CD8-positive, alpha-beta T cell (primary cell): ENCODE measurements at regions of chr1 and their contacts with region 1.

Region 1: GRCh38 chr1:173867753-173868265 is at the start of gene GAS5:
- DNase-seq: peak; percentile 97 to 99 (median 98)
- ATAC-seq: peak; percentile 78
- H3K4me3 ChIP-seq: peak within 1 kb of the TSS; percentile 74 to 93
- H3K4me3 Mint-ChIP-seq: peak within 1 kb of the TSS; percentile 95
- H3K27ac ChIP-seq: peak within 1 kb of the TSS; percentile 75 to 93
- H3K27ac Mint-ChIP-seq: peak within 1 kb of the TSS; percentile 96
- H3K4me1 ChIP-seq: peaks cover 61% of the 10 kb centered on the region
- H3K4me1 Mint-ChIP-seq: peaks cover 70% of the 10 kb centered on the region
- H3K27me3 ChIP-seq: no peaks in the 10 kb centered on the region
- H3K27me3 Mint-ChIP-seq: no peaks in the 10 kb centered on the region
- CTCF ChIP-seq: no peak
- total RNA-seq, gene GAS5: 774 to 800 TPM

Region 2: DNA sequence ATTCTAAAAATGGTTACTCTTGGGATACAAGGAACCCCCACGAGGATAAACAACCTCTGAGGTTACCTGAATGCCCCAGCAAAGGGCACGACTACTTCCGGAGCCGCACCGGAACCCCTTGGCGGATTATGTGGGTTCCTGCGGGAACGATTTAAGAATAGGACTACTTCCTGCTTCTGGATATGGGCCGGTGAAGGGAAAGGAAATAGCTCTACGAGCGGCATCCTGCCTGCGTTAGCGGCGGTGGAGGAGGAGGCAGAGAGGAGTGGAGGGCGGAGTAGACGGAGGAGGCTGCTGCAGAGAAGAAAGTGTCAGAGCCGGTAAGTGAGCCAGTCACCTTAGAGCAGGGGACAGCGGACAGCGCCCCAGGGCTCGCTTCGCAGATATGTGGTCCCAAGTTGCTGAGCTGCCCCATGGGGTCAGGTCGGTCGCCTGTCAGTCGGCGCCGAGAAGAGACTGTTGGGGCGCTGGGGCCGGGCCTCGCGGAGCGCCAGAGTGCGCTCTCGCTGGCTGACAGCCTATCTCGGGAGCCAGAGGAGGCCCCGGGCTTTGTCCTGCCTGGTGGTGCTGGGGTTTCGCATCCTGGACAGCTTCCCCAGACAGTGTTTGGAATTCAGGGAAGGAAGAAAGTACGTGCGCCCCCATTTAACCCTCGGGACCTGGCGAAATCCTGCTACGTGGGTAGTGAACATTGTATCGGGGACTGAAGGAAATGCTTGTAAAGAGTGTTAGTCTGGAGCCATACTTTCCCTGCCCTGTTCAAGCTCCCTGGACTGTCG is 152.9 kb before region 1 on chr1 and contains the start of gene KLHL20:
- CTCF ChIA-PET with region 1: no interaction called
- POLR2A ChIA-PET with region 1: interaction called, 11 read pairs
- intact Hi-C with region 1: loop called (anchors 1 to 5 kb)
- DNase-seq: peak; percentile 72 to 94 (median 83)
- ATAC-seq: peak; percentile 98
- H3K4me3 ChIP-seq: peak within 1 kb of the TSS; percentile 80 to 86
- H3K4me3 Mint-ChIP-seq: peak within 1 kb of the TSS; percentile 96
- H3K27ac ChIP-seq: peak within 1 kb of the TSS; percentile 76 to 87
- H3K27ac Mint-ChIP-seq: peak within 1 kb of the TSS; percentile 97
- H3K4me1 ChIP-seq: peaks cover 24% of the 10 kb centered on the region
- H3K4me1 Mint-ChIP-seq: peaks cover 38% of the 10 kb centered on the region
- H3K27me3 ChIP-seq: peaks cover 0 to 2% of the 10 kb centered on the region in 2 experiments
- H3K27me3 Mint-ChIP-seq: peaks cover 7% of the 10 kb centered on the region
- CTCF ChIP-seq: no peak
- total RNA-seq, gene KLHL20: 27.9 to 29.0 TPM

Region 3: DNA sequence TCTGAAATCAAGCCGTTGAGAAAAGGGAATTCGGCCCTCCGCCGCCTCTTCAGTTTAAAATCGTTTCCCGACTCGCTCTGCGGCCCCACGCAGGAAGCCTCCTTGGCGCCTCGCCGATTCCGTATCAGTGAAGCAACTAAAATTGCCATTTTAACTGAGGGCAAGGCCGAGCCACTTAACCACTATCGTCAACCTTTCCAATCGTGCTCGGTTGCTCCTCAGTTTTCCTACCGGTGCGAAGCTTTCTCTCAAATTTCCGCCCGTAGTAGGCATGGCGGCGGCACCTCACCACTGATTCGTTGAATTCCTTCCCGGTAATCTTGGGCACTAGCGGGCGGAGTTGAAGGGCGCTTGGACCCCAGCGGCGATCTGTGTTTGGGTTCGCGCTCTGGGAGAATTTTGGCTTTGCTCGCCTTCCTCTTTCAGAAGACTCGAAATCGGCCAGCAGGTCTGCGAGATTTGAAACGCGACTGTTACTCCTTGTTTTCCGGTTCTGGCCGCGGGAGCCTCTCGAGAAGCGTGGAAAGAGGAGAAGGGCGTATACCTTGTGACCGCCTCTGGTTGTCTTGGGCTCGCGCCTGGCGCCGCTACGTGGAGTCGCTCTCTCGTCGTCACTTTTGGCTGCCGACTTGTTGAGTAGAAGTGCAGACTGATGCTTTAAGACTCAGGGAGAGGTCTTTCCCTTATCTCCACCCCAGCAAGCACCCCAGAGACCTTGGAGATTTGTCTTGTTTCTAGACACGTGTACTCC is 43.3 kb before region 1 on chr1 and contains the starts of genes CENPL and DARS2:
- CTCF ChIA-PET with region 1: interaction called, 9 read pairs
- POLR2A ChIA-PET with region 1: interaction called, 24 read pairs
- intact Hi-C with region 1: loop called (anchors 1 kb)
- DNase-seq: peak; percentile 79 to 97 (median 90)
- ATAC-seq: peak; percentile 86
- H3K4me3 ChIP-seq: peak within 1 kb of the TSS; percentile 92 to 97
- H3K4me3 Mint-ChIP-seq: peak within 1 kb of the TSS; percentile 93
- H3K27ac ChIP-seq: peak within 1 kb of the TSS; percentile 78 to 87
- H3K27ac Mint-ChIP-seq: peak within 1 kb of the TSS; percentile 90
- H3K4me1 ChIP-seq: peaks cover 11% of the 10 kb centered on the region
- H3K4me1 Mint-ChIP-seq: peaks cover 54% of the 10 kb centered on the region
- H3K27me3 ChIP-seq: no peaks in the 10 kb centered on the region
- H3K27me3 Mint-ChIP-seq: no peaks in the 10 kb centered on the region
- CTCF ChIP-seq: no peak
- total RNA-seq, gene CENPL: 4.0 to 5.7 TPM
- total RNA-seq, gene DARS2: 1.5 to 1.6 TPM

Region 4: GRCh38 chr1:173853074-173853473 is 14.7 kb before region 1 on chr1:
- CTCF ChIA-PET with region 1: no interaction called
- POLR2A ChIA-PET with region 1: interaction called, 12 read pairs
- intact Hi-C with region 1: no loop called
- DNase-seq: no peak
- ATAC-seq: no peak
- H3K4me3 ChIP-seq: no peak overlapping the region
- H3K4me3 Mint-ChIP-seq: no peak overlapping the region
- H3K27ac ChIP-seq: no peak overlapping the region
- H3K27ac Mint-ChIP-seq: no peak overlapping the region
- H3K4me1 ChIP-seq: no peaks in the 10 kb centered on the region
- H3K4me1 Mint-ChIP-seq: no peaks in the 10 kb centered on the region
- H3K27me3 ChIP-seq: no peaks in the 10 kb centered on the region
- H3K27me3 Mint-ChIP-seq: no peaks in the 10 kb centered on the region
- CTCF ChIP-seq: no peak

Region 5: GRCh38 chr1:174022080-174022975 is 154.5 kb after region 1 on chr1 and contains the start of gene RC3H1:
- CTCF ChIA-PET with region 1: no interaction called
- POLR2A ChIA-PET with region 1: interaction called, 8 read pairs
- intact Hi-C with region 1: loop called (anchors 1 to 2 kb)
- DNase-seq: peak; percentile 79 to 93 (median 89)
- ATAC-seq: peak; percentile 95
- H3K4me3 ChIP-seq: peak within 1 kb of the TSS; percentile 83 to 94
- H3K4me3 Mint-ChIP-seq: peak within 1 kb of the TSS; percentile 95
- H3K27ac ChIP-seq: peak within 1 kb of the TSS; percentile 84 to 93
- H3K27ac Mint-ChIP-seq: peak within 1 kb of the TSS; percentile 98
- H3K4me1 ChIP-seq: peaks cover 30% of the 10 kb centered on the region
- H3K4me1 Mint-ChIP-seq: peaks cover 45% of the 10 kb centered on the region
- H3K27me3 ChIP-seq: no peaks in the 10 kb centered on the region
- H3K27me3 Mint-ChIP-seq: no peaks in the 10 kb centered on the region
- CTCF ChIP-seq: no peak
- total RNA-seq, gene RC3H1: 40.2 to 41.4 TPM

Region 6: DNA sequence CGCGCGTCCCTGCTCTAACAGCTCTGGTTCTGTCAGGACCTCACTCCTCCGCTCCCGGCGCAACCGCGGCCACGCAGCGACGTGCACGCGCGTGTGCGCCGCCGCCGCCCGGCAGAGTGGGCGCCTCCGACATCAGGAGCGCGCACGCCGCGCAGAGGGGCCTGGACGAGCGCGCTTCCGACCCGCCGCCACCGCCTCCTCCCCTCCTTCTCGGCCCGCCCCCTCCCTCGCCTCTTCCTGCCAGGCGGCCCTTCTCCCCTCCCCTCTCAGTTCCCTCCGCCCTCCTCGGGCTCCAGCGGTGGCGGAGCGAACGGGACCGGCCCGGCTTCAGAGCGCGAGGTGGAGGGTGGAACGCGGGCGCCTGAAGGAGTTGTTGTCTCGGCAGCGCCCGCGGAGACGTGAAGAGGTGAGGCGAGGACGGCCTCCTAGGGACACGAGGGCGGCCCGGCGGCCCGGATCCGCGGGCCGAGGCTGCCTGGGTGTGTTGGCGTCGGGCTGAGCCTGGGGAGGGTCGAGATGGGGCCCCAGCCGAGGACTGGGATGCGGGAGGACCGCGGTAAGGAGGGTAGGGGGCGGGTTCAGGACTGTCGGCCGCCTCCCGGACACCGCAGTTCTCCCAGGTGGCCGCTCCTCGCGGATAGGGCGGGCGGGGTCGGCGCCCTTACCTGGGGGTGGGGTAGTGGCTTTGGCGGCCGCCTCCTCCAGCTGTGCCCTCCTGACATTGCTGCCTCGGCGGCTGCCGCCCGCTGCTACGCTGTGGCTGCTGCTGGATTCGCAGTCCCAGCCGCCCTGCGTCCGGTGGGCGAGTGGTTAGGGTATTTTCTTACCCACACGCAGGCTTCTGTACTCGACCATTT is 291.7 kb after region 1 on chr1 and contains the start of gene RABGAP1L:
- CTCF ChIA-PET with region 1: no interaction called
- POLR2A ChIA-PET with region 1: interaction called, 4 read pairs
- intact Hi-C with region 1: loop called (anchors 1 to 2 kb)
- DNase-seq: peak; percentile 90 to 98 (median 93)
- ATAC-seq: peak; percentile 90
- H3K4me3 ChIP-seq: peak within 1 kb of the TSS; percentile 73 to 74
- H3K4me3 Mint-ChIP-seq: peak within 1 kb of the TSS; percentile 91
- H3K27ac ChIP-seq: peak within 1 kb of the TSS; percentile 73 to 93
- H3K27ac Mint-ChIP-seq: peak within 1 kb of the TSS; percentile 96
- H3K4me1 ChIP-seq: peaks cover 16% of the 10 kb centered on the region
- H3K4me1 Mint-ChIP-seq: peaks cover 53% of the 10 kb centered on the region
- H3K27me3 ChIP-seq: no peaks in the 10 kb centered on the region
- H3K27me3 Mint-ChIP-seq: no peaks in the 10 kb centered on the region
- CTCF ChIP-seq: no peak
- total RNA-seq, gene RABGAP1L: 60.7 to 65.1 TPM

Region 7: DNA sequence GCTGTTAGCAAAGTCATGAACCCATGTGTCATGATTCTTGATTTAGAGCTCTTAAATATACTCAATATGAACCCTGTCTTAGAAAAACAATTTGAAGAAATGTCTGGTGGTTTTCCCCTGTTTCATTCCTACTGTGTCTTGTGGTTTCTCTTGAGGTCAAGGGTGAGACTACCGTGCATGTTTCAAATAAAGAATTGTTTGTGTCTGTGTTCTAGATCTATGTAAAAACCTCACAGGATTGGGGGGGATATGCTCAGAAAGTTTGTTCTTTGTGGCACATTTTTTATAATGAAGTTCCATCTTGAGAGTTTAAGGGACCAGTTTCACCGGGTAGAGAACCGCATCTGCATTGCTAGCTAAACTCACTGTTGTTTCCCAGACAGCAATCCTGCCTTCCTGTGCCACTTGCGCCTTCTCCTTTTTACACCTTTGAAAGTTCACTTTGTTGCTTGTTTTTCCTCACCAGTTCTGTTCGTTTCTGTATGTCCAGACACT is 1101.0 kb after region 1 on chr1:
- CTCF ChIA-PET with region 1: no interaction called
- POLR2A ChIA-PET with region 1: no interaction called
- intact Hi-C with region 1: loop called in 1 of 2 experiments (anchors 10 kb)
- DNase-seq: peak in 6 of 9 experiments; percentile 27 to 92 (median 53)
- ATAC-seq: peak; percentile 48
- H3K4me3 ChIP-seq: peak overlapping the region; percentile 2 to 16
- H3K4me3 Mint-ChIP-seq: peak overlapping the region; percentile 77
- H3K27ac ChIP-seq: peak overlapping the region; percentile 59 to 89
- H3K27ac Mint-ChIP-seq: peak overlapping the region; percentile 98
- H3K4me1 ChIP-seq: peaks cover 73% of the 10 kb centered on the region
- H3K4me1 Mint-ChIP-seq: peaks cover 76% of the 10 kb centered on the region
- H3K27me3 ChIP-seq: no peaks in the 10 kb centered on the region
- H3K27me3 Mint-ChIP-seq: no peaks in the 10 kb centered on the region
- CTCF ChIP-seq: no peak